Activated CD4-positive, alpha-beta memory T cell treated with anti-CD3 and anti-CD28 coated beads for 36 hours (primary cell): ENCODE measurements at regions of chr5 and their contacts with region 1.

Region 1: GRCh38 chr5:39080597-39081204 is 6.5 kb upstream of the RICTOR start:
- DNase-seq: peak; percentile 55
- H3K4me3 Mint-ChIP-seq: no peak overlapping the region
- H3K27ac Mint-ChIP-seq: no peak overlapping the region
- H3K4me1 Mint-ChIP-seq: peaks cover 19% of the 10 kb centered on the region
- H3K27me3 Mint-ChIP-seq: peaks cover 31% of the 10 kb centered on the region

Region 2: GRCh38 chr5:38528162-38528703 is 552.5 kb before region 1 on chr5:
- CTCF ChIA-PET with region 1: no interaction called
- POLR2A ChIA-PET with region 1: no interaction called
- intact Hi-C with region 1: no loop called
- DNase-seq: no peak
- H3K4me3 Mint-ChIP-seq: no peak overlapping the region
- H3K27ac Mint-ChIP-seq: no peak overlapping the region
- H3K4me1 Mint-ChIP-seq: no peaks in the 10 kb centered on the region
- H3K27me3 Mint-ChIP-seq: peaks cover 17% of the 10 kb centered on the region

Region 3: DNA sequence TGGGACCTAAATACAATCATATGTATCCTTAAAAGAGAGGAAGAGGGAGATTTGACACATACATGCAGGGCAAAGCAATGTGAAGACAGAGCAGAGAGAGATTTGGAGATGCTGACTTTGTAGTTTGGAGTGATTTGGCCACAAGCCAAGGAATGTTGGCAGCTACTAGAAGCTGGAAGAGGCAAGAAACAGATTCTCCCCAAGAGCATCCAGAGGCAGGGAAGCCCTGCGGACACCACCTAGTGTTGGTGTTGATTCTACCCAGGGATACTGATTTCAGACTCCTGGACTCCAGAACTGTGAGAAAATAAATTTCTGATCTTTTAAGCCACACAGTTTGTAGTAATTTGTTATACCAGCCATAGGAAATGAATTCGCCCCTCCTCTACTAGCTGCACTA is 299.8 kb before region 1 on chr5:
- CTCF ChIA-PET with region 1: no interaction called
- POLR2A ChIA-PET with region 1: no interaction called
- intact Hi-C with region 1: no loop called
- DNase-seq: no peak
- H3K4me3 Mint-ChIP-seq: no peak overlapping the region
- H3K27ac Mint-ChIP-seq: no peak overlapping the region
- H3K4me1 Mint-ChIP-seq: no peaks in the 10 kb centered on the region
- H3K27me3 Mint-ChIP-seq: peaks cover 14% of the 10 kb centered on the region

Region 4: DNA sequence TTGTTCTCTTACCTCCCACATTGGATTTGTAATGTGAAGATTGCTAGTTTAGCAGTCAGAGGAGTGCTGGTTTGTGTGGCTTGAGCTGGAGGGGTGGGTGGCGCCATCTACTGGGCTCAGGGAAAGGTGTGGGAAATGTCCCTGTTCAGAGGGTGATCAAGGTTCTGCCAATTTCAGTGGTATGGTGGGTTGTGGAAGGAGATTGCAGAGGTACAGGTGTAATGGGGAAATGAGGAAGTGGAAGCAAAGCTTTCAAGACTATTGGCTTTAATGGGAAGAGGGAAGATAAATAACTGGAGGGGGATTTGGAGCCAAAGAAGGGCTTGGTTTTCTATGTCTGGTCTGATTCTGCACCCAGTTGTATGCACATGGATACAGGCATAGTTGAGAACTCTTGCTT is 158.5 kb before region 1 on chr5:
- CTCF ChIA-PET with region 1: interaction called, 14 read pairs
- POLR2A ChIA-PET with region 1: no interaction called
- intact Hi-C with region 1: no loop called
- DNase-seq: peak; percentile 72
- H3K4me3 Mint-ChIP-seq: no peak overlapping the region
- H3K27ac Mint-ChIP-seq: no peak overlapping the region
- H3K4me1 Mint-ChIP-seq: no peaks in the 10 kb centered on the region
- H3K27me3 Mint-ChIP-seq: peaks cover 17% of the 10 kb centered on the region

Region 5: GRCh38 chr5:39005566-39006232 is 75.0 kb before region 1 on chr5:
- CTCF ChIA-PET with region 1: interaction called, 26 read pairs
- POLR2A ChIA-PET with region 1: no interaction called
- intact Hi-C with region 1: loop called (anchors 2 kb)
- DNase-seq: no peak
- H3K4me3 Mint-ChIP-seq: no peak overlapping the region
- H3K27ac Mint-ChIP-seq: no peak overlapping the region
- H3K4me1 Mint-ChIP-seq: peaks cover 47% of the 10 kb centered on the region
- H3K27me3 Mint-ChIP-seq: no peaks in the 10 kb centered on the region

Region 6: GRCh38 chr5:39092581-39093350 is 12.1 kb after region 1 on chr5:
- CTCF ChIA-PET with region 1: interaction called, 19 read pairs
- POLR2A ChIA-PET with region 1: no interaction called
- intact Hi-C with region 1: no loop called
- DNase-seq: no peak
- H3K4me3 Mint-ChIP-seq: no peak overlapping the region
- H3K27ac Mint-ChIP-seq: no peak overlapping the region
- H3K4me1 Mint-ChIP-seq: peaks cover 4% of the 10 kb centered on the region
- H3K27me3 Mint-ChIP-seq: peaks cover 16% of the 10 kb centered on the region

Region 7: GRCh38 chr5:39113354-39113953 is 32.8 kb after region 1 on chr5:
- CTCF ChIA-PET with region 1: interaction called, 11 read pairs
- POLR2A ChIA-PET with region 1: interaction called, 3 read pairs
- intact Hi-C with region 1: no loop called
- DNase-seq: no peak
- H3K4me3 Mint-ChIP-seq: no peak overlapping the region
- H3K27ac Mint-ChIP-seq: no peak overlapping the region
- H3K4me1 Mint-ChIP-seq: peaks cover 38% of the 10 kb centered on the region
- H3K27me3 Mint-ChIP-seq: no peaks in the 10 kb centered on the region